Ovary (tissue), 10 donors: ENCODE measurements at regions of chr16 and their contacts with region 1.

Region 1: DNA sequence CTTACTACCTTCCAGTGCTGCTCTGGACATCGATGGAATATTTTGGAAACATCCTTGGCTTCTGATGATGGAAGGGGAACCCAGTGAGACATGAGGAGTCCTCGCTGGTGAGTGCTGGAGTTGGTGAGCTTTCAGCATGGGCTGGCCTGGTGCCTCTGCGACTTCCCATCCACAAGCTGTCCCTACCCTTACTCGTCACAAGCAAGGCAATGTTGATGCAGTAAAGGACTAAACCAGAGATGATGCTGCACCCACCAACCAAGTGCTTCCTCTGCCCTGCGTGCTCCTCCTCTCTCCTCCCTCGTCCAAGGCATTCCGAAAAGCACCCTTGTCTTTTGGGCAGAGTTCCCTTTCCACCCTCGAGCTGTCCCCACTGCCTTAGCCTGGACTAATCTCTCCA is 154.7 kb downstream of the GRIN2A start:
- DNase-seq: no peak
- H3K4me3 ChIP-seq: no peak overlapping the region
- H3K27ac ChIP-seq: no peak overlapping the region
- H3K4me1 ChIP-seq: no peaks in the 10 kb centered on the region
- H3K27me3 ChIP-seq: no peaks in the 10 kb centered on the region
- CTCF ChIP-seq: no peak
- EP300 ChIP-seq: no peak
- POLR2A ChIP-seq: no peak

Region 2: DNA sequence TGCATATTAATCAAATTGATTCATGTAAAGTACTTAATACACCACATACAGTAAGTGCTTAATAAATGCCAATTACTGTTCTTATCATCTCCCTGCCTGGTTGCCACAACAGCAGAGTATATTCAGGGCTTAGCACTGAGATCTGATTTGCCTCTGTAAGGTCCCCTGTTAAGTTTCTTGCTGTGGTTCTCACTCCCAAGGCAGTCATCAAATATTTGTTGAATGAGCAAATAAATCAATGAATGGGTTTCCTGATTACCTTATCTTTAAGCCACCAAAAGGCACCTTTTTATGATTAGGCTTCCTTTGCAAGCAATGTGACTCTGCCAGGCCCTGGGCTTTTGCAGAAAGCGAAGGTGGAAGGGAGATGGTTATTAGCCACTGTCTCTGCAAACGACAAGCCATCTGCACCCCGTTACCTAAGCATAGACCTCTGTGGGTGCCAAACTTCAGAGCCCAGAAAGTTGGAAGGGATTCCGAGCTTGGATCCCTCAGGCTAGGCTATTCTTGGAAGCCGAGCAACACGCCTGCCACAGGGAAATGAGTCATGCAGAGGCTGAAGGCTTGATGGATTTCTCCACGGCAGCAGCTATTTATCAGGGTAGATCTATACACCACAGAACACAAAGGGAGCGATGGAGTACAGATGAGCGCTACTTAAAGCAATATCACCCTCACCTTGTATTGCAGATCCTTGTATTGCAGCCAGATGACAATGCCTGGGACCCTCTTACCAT is 52.7 kb after region 1 on chr16:
- intact Hi-C with region 1: no loop called
- DNase-seq: no peak
- H3K4me3 ChIP-seq: no peak overlapping the region
- H3K27ac ChIP-seq: no peak overlapping the region
- H3K4me1 ChIP-seq: peaks cover 1% of the 10 kb centered on the region
- H3K27me3 ChIP-seq: no peaks in the 10 kb centered on the region
- CTCF ChIP-seq: no peak
- EP300 ChIP-seq: no peak
- POLR2A ChIP-seq: no peak

Region 3: GRCh38 chr16:11572301-11572995 is 1544.9 kb after region 1 on chr16:
- intact Hi-C with region 1: loop called in 1 of 4 experiments (anchors 5 kb)
- DNase-seq: peak in 1 of 5 donors; percentile 18
- H3K4me3 ChIP-seq: no peak overlapping the region
- H3K27ac ChIP-seq: no peak overlapping the region
- H3K4me1 ChIP-seq: peaks cover 8% of the 10 kb centered on the region
- H3K27me3 ChIP-seq: no peaks in the 10 kb centered on the region
- CTCF ChIP-seq: no peak
- EP300 ChIP-seq: no peak
- POLR2A ChIP-seq: no peak